ENCODE measurements at regions of chr5 and their contacts with region 1.

Region 1: DNA sequence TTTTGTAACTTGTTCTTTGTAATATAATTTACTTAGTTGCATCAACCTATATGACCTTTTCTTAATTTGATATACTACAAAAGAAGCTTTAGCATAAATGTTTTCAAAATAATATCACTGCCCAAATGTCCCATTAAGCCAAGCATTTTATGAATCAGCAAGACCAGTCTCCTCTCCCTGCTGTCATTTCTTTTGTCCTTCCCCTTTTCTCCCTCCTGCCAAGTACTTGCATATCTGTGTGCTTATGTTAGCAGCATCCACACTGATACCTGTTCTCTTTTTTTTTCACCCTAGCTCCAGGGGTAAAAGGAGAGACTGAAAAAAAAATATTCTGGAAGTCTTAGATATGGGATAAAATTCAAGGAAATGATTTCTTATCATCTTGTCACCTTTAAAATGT is 69.7 kb downstream of the ZSWIM6 start:
- DNase-seq: no peak
- ATAC-seq: no peak
- H3K4me3 ChIP-seq: no peak overlapping the region
- H3K27ac ChIP-seq: no peak overlapping the region
- H3K4me1 ChIP-seq: peaks cover 11 to 18% of the 10 kb centered on the region in 2 donors
- H3K27me3 ChIP-seq: no peaks in the 10 kb centered on the region
- CTCF ChIP-seq: no peak
- POLR2A ChIP-seq: no peak

Region 2: DNA sequence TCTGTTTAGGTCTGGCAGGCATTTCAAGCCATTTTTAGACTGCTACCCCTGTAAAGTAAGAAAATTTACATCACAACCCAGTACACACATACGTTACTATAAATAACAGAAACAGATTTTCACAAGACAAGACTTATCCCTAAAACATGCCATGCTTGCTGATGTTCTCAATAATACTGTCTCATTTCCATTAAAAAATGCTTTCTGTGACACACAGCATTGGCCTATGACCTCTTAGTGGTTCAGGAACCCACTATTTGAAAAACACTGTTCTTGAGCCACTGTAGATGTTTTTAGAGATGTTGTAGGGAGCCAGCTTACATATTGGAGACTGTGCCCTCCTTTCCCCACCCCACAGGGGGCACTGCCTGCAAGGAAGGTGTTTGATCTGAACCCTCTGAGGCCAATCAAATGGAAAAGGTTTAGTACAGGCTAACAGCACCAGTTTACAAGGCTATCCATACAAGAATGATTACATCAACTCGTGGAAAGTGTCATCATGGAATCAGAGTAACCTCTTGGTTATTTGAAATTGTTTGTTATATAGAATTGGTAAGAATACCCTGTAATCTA is 38.8 kb before region 1 on chr5:
- in situ Hi-C with region 1: no loop called
- intact Hi-C with region 1: loop called (anchors 5 kb)
- DNase-seq: no peak
- ATAC-seq: no peak
- H3K4me3 ChIP-seq: no peak overlapping the region
- H3K27ac ChIP-seq: no peak overlapping the region
- H3K4me1 ChIP-seq: peaks cover 6 to 10% of the 10 kb centered on the region in 2 donors
- H3K27me3 ChIP-seq: no peaks in the 10 kb centered on the region
- CTCF ChIP-seq: no peak
- POLR2A ChIP-seq: no peak

Region 3: GRCh38 chr5:61423487-61424145 is 21.9 kb after region 1 on chr5:
- in situ Hi-C with region 1: no loop called
- intact Hi-C with region 1: no loop called
- DNase-seq: no peak
- ATAC-seq: no peak
- H3K4me3 ChIP-seq: peak overlapping the region in 2 of 4 donors; percentile 3 to 7
- H3K27ac ChIP-seq: peak overlapping the region in 1 of 4 donors; percentile 52
- H3K4me1 ChIP-seq: peaks cover 20 to 32% of the 10 kb centered on the region in 2 donors
- H3K27me3 ChIP-seq: no peaks in the 10 kb centered on the region
- CTCF ChIP-seq: no peak
- POLR2A ChIP-seq: no peak

Region 4: GRCh38 chr5:61603211-61603908 is 201.6 kb after region 1 on chr5:
- in situ Hi-C with region 1: no loop called
- intact Hi-C with region 1: no loop called
- DNase-seq: no peak
- ATAC-seq: no peak
- H3K4me3 ChIP-seq: no peak overlapping the region
- H3K27ac ChIP-seq: no peak overlapping the region
- H3K4me1 ChIP-seq: no peaks in the 10 kb centered on the region
- H3K27me3 ChIP-seq: no peaks in the 10 kb centered on the region
- CTCF ChIP-seq: no peak
- POLR2A ChIP-seq: no peak

Measured in gastrocnemius medialis (tissue), 4 donors.